SK-N-SH (cell line): ENCODE measurements at regions of chr12 and their contacts with region 1.

Region 1: GRCh38 chr12:119069147-119069642 is 87.9 kb downstream of the SRRM4 start:
- DNase-seq: no peak
- H3K4me3 ChIP-seq: no peak overlapping the region
- H3K27ac ChIP-seq: peak overlapping the region in 1 of 2 experiments; percentile 99; a peak in 2 of 4 replicates
- H3K4me1 ChIP-seq: peaks cover 0 to 59% of the 10 kb centered on the region in 2 experiments; a peak in 2 of 4 replicates
- H3K27me3 ChIP-seq: no peaks in the 10 kb centered on the region
- CTCF ChIP-seq: no peak
- EP300 ChIP-seq: no peak
- RAD21 ChIP-seq: no peak

Region 2: GRCh38 chr12:118979763-118980406 is 89.3 kb before region 1 on chr12:
- CTCF ChIA-PET with region 1: interaction called, 4 read pairs
- POLR2A ChIA-PET with region 1: interaction called, 11 read pairs
- DNase-seq: peak; percentile 73
- H3K4me3 ChIP-seq: peak overlapping the region; percentile 54 to 55; a peak in 2 of 4 replicates
- H3K27ac ChIP-seq: peak overlapping the region in 1 of 2 experiments; percentile 89; a peak in 2 of 4 replicates
- H3K4me1 ChIP-seq: peaks cover 0 to 8% of the 10 kb centered on the region in 2 experiments; a peak in 1 of 4 replicates
- H3K27me3 ChIP-seq: no peaks in the 10 kb centered on the region
- CTCF ChIP-seq: peak; percentile 64
- EP300 ChIP-seq: no peak
- RAD21 ChIP-seq: peak; percentile 87

Region 3: GRCh38 chr12:119008691-119009221 is 60.4 kb before region 1 on chr12:
- CTCF ChIA-PET with region 1: interaction called, 6 read pairs
- POLR2A ChIA-PET with region 1: interaction called, 10 read pairs
- DNase-seq: peak; percentile 74
- H3K4me3 ChIP-seq: peak overlapping the region in 1 of 2 experiments; percentile 24; a peak in 1 of 4 replicates
- H3K27ac ChIP-seq: peak overlapping the region in 1 of 2 experiments; percentile 92; a peak in 2 of 4 replicates
- H3K4me1 ChIP-seq: peaks cover 0 to 53% of the 10 kb centered on the region in 2 experiments; a peak in 2 of 4 replicates
- H3K27me3 ChIP-seq: no peaks in the 10 kb centered on the region
- CTCF ChIP-seq: no peak
- EP300 ChIP-seq: peak in 1 of 2 experiments; percentile 68; a peak in 1 of 4 replicates
- RAD21 ChIP-seq: no peak

Region 4: GRCh38 chr12:119082496-119082895 is 13.3 kb after region 1 on chr12:
- CTCF ChIA-PET with region 1: interaction called, 14 read pairs
- POLR2A ChIA-PET with region 1: interaction called, 17 read pairs
- DNase-seq: peak; percentile 62
- H3K4me3 ChIP-seq: no peak overlapping the region
- H3K27ac ChIP-seq: peak overlapping the region in 1 of 2 experiments; percentile 88; a peak in 2 of 4 replicates
- H3K4me1 ChIP-seq: peaks cover 0 to 50% of the 10 kb centered on the region in 2 experiments; a peak in 2 of 4 replicates
- H3K27me3 ChIP-seq: no peaks in the 10 kb centered on the region
- CTCF ChIP-seq: no peak
- EP300 ChIP-seq: peak in 1 of 2 experiments; percentile 80; a peak in 2 of 4 replicates
- RAD21 ChIP-seq: peak; percentile 8; the same call in 1 of the 2 replicates